K562 (cell line): ENCODE measurements at regions of chr3 and their contacts with region 1.

Region 1: DNA sequence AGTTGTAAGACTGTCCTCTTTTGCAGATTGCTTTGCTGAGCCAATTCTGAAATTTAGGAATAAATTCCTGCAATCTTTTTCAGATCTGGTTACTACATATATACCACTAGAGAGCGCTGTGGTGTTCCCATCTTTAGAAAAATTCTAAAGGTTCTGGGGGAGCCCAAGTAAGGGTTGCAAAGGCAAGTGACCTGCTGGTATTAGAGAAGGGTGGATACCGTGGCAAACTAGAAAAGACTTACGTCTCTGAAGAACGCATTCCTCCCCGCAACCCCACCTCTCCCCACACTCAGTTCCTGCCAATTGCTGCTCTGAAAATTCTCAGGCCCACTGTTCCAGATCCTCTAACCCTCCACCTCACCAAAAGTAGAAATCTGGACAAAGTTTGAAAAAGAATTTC is 48.5 kb downstream of the EFHB start:
- DNase-seq: peak; percentile 64 to 73 (median 69)
- ATAC-seq: peak; percentile 71
- H3K4me3 ChIP-seq: no peak overlapping the region
- H3K27ac ChIP-seq: no peak overlapping the region
- H3K4me1 ChIP-seq: peaks cover 0 to 17% of the 10 kb centered on the region in 2 experiments; a peak in 3 of 5 replicates
- H3K27me3 ChIP-seq: no peaks in the 10 kb centered on the region; a peak in 1 of 5 replicates
- CTCF ChIP-seq: peak; percentile 56 to 90 (median 77); a peak in 5 of 6 replicates
- EP300 ChIP-seq: peak; percentile 25; the same call in 1 of the 2 replicates
- POLR2A ChIP-seq: no peak
- RAD21 ChIP-seq: peak; percentile 92

Region 2: DNA sequence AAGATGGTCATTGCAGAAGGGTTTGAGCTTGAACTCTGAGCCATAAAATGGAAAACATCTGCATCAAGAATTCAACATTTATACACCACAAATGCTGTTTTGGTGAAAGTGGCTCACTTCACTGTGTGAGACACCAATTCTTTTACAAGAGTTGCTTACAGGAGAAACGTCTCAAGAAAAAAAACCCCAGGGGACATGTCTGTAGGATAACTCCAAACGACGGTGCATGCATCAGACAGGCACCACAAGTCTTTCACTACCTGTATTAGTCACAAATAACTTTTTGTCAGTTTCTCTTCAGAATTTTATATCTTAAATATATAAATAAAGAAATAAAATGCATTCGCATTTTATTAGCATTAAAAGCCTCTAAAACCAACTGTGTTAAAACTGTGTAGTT is 115.8 kb before region 1 on chr3:
- CTCF ChIA-PET with region 1: no interaction called
- POLR2A ChIA-PET with region 1: no interaction called
- in situ Hi-C with region 1: no loop called
- intact Hi-C with region 1: no loop called
- DNase-seq: no peak
- ATAC-seq: no peak
- H3K4me3 ChIP-seq: no peak overlapping the region
- H3K27ac ChIP-seq: no peak overlapping the region
- H3K4me1 ChIP-seq: no peaks in the 10 kb centered on the region
- H3K27me3 ChIP-seq: no peaks in the 10 kb centered on the region
- CTCF ChIP-seq: no peak
- EP300 ChIP-seq: no peak
- POLR2A ChIP-seq: no peak
- RAD21 ChIP-seq: no peak

Region 3: GRCh38 chr3:19901337-19901736 is 15.9 kb after region 1 on chr3:
- CTCF ChIA-PET with region 1: no interaction called
- POLR2A ChIA-PET with region 1: interaction called, 12 read pairs
- in situ Hi-C with region 1: no loop called
- intact Hi-C with region 1: no loop called
- DNase-seq: no peak
- ATAC-seq: peak; percentile 39; the same call in 1 of the 3 replicates
- H3K4me3 ChIP-seq: no peak overlapping the region
- H3K27ac ChIP-seq: no peak overlapping the region
- H3K4me1 ChIP-seq: no peaks in the 10 kb centered on the region; a peak in 1 of 5 replicates
- H3K27me3 ChIP-seq: no peaks in the 10 kb centered on the region
- CTCF ChIP-seq: peak in 1 of 3 experiments; percentile 18; a peak in 1 of 6 replicates
- EP300 ChIP-seq: no peak
- POLR2A ChIP-seq: no peak
- RAD21 ChIP-seq: peak in 1 of 2 experiments; percentile 21; a peak in 1 of 4 replicates

Region 4: GRCh38 chr3:19931180-19931692 is 45.8 kb after region 1 on chr3:
- CTCF ChIA-PET with region 1: no interaction called
- POLR2A ChIA-PET with region 1: no interaction called
- in situ Hi-C with region 1: no loop called
- intact Hi-C with region 1: loop called (anchors 5 kb)
- DNase-seq: peak in 2 of 4 experiments; percentile 45 to 59
- ATAC-seq: peak; percentile 59
- H3K4me3 ChIP-seq: no peak overlapping the region
- H3K27ac ChIP-seq: peak overlapping the region; percentile 50
- H3K4me1 ChIP-seq: peaks cover 24 to 42% of the 10 kb centered on the region in 2 experiments
- H3K27me3 ChIP-seq: no peaks in the 10 kb centered on the region
- CTCF ChIP-seq: no peak
- EP300 ChIP-seq: no peak
- POLR2A ChIP-seq: no peak
- RAD21 ChIP-seq: 0 out of 4 replicates have a peak, but pooled peaks of 1 of the 2 experiments have one; percentile 9

Region 5: DNA sequence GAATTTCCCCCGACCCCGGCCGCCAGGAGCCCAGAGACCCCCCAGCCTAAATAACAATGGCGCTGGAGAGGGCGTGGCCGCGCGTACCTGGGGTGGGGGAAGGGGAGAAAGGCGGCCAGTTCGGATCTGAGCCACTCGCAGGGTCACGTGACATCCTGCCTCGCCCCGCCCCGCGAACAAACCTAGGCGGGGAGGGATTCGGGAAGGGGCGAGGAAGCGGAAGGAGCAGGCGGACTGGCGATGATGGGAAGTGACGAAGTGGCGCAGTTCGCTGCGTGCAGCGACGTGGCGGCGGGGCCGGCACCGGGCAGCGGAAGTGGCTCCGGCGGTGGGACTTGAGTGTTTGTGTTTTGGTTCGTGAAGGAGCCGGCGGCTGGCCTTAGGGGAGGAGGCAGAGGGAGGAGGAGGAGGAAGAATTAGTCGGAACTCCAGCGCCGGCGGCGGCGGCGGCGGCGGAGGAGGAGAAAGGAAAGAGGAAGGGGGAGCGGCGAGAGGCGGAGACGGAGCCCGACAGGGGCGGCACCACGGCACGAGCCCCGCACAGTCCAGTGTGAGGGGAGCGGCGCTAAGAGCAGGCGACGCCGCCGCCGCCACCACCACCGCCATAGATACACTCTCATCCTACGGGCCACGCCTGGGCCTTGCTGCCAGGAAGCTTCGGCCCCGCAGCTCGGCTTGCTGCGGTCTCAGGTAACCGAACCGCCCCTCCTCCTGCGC is 61.5 kb after region 1 on chr3 and contains the start of gene RAB5A:
- CTCF ChIA-PET with region 1: interaction called, 3 read pairs
- POLR2A ChIA-PET with region 1: interaction called, 10 read pairs
- in situ Hi-C with region 1: no loop called
- intact Hi-C with region 1: loop called (anchors 1 kb)
- DNase-seq: peak; percentile 94 to 100 (median 97)
- ATAC-seq: peak; percentile 90
- H3K4me3 ChIP-seq: peak within 1 kb of the TSS; percentile 91
- H3K27ac ChIP-seq: peak within 1 kb of the TSS; percentile 98
- H3K4me1 ChIP-seq: peaks cover 9 to 11% of the 10 kb centered on the region in 2 experiments; a peak in 4 of 5 replicates
- H3K27me3 ChIP-seq: no peaks in the 10 kb centered on the region
- CTCF ChIP-seq: 0 out of 6 replicates have a peak, but pooled peaks of 1 of the 3 experiments have one; percentile 1
- EP300 ChIP-seq: no peak; the same call in 1 of the 2 replicates
- POLR2A ChIP-seq: peak; percentile 93
- RAD21 ChIP-seq: peak; percentile 4 to 34; a peak in 2 of 4 replicates
- polyA plus RNA-seq, gene RAB5A: 28.3 to 31.3 TPM

Region 6: GRCh38 chr3:20154931-20155330 is 269.5 kb after region 1 on chr3:
- CTCF ChIA-PET with region 1: no interaction called
- POLR2A ChIA-PET with region 1: no interaction called
- in situ Hi-C with region 1: no loop called
- intact Hi-C with region 1: loop called (anchors 5 kb)
- DNase-seq: no peak
- ATAC-seq: peak; percentile 41; the same call in 2 of the 3 replicates
- H3K4me3 ChIP-seq: no peak overlapping the region
- H3K27ac ChIP-seq: no peak overlapping the region
- H3K4me1 ChIP-seq: no peaks in the 10 kb centered on the region
- H3K27me3 ChIP-seq: no peaks in the 10 kb centered on the region
- CTCF ChIP-seq: peak in 1 of 3 experiments; percentile 18; a peak in 2 of 6 replicates
- EP300 ChIP-seq: no peak
- POLR2A ChIP-seq: no peak
- RAD21 ChIP-seq: peak in 1 of 2 experiments; percentile 26; a peak in 1 of 4 replicates

Region 7: DNA sequence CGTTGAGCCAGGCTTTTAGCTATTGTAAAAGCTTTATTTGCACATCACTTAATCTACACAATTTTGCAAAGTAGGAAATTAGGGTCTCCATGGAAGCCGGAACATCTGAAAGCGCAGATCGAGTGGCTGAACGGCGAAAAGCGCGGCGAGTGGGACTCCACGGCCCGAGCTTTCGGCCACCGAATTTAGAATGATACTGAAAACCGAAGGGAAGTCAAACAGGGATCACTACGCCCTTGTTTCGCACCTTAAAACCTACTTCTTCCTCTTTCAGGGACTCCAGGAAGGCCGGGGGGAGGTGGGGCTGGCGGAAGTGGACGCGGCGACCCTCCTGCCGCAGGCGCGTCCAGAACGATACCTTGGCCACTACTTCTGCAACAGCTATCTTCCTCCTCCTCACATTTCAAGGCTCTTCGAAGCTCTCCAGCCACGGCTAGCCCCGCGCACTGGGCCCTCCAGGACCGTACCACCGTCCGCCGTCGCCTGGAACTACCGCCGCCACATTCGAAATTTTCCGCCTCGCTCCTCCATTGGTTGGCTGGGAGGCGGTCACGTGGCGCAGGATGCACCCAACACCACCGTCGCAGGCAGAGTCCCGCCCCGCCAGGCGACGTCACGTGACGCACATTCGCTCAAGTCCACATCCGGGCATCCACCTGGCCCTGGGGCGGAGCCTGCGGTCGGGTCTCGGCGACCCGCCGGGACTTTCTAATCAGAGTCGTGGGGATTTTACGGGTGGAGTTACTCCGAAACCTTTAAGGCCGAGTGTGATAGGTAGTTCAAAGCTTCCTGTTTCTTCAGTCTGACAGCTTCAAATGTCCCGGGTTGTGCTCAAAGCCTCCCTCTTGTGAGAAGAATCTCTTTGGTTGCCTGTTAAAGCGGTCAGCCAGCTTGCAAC is 300.5 kb after region 1 on chr3 and contains the start of gene SGO1:
- CTCF ChIA-PET with region 1: no interaction called
- POLR2A ChIA-PET with region 1: interaction called, 4 read pairs
- in situ Hi-C with region 1: no loop called
- intact Hi-C with region 1: loop called (anchors 5 kb)
- DNase-seq: peak; percentile 98 to 100 (median 99)
- ATAC-seq: peak; percentile 94
- H3K4me3 ChIP-seq: peak within 1 kb of the TSS; percentile 61
- H3K27ac ChIP-seq: peak within 1 kb of the TSS; percentile 94
- H3K4me1 ChIP-seq: peaks cover 0 to 8% of the 10 kb centered on the region in 2 experiments; a peak in 2 of 5 replicates
- H3K27me3 ChIP-seq: no peaks in the 10 kb centered on the region
- CTCF ChIP-seq: no peak
- EP300 ChIP-seq: peak; percentile 9
- POLR2A ChIP-seq: peak; percentile 95
- RAD21 ChIP-seq: 0 out of 4 replicates have a peak, but pooled peaks of 1 of the 2 experiments have one; percentile 6
- polyA plus RNA-seq, gene SGO1: 13.7 to 17.0 TPM

Region 8: DNA sequence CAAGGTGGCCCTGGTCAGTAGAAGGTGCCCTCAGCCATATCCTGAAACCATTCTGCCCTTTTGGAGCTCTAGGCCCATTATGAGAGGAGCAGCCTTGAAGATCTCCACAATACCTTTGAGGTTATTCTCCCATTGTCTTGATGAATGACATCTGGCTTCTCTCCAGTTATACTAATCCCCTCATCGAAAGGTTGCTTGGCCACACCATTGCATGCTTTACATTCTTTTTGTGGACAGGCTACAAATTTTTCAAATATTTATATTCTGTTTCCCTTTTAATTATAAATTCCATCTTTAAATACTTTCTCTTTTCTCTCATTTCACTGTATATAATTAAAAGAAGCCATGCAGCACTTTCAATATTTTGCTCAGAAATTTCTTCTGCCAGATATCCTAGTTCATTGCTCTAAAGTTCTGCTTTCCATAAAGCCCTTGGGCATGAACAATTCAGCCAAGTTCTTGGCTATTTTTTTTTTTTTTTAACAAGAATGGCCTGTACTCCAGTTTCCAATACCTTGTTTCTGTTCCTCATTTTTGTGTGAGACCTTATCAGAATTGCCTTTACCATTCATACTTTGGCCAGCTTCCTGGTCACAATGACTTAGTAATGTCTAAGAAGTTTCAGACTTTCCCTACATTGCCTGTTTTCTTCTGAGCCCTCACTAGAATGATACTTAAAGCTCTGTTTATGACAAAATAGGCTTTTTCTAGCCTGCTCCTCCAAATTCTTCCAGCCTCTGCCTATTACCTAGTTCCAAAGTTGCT is 439.4 kb after region 1 on chr3:
- CTCF ChIA-PET with region 1: no interaction called
- POLR2A ChIA-PET with region 1: no interaction called
- in situ Hi-C with region 1: no loop called
- intact Hi-C with region 1: loop called (anchors 5 kb)
- DNase-seq: peak in 1 of 4 experiments; percentile 68
- ATAC-seq: peak; percentile 54
- H3K4me3 ChIP-seq: no peak overlapping the region
- H3K27ac ChIP-seq: peak overlapping the region; percentile 76
- H3K4me1 ChIP-seq: peaks cover 16 to 62% of the 10 kb centered on the region in 2 experiments
- H3K27me3 ChIP-seq: no peaks in the 10 kb centered on the region
- CTCF ChIP-seq: no peak
- EP300 ChIP-seq: peak; percentile 72
- POLR2A ChIP-seq: no peak
- RAD21 ChIP-seq: no peak